ENCODE measurements at regions of chr6 and their contacts with region 1.

Region 1: DNA sequence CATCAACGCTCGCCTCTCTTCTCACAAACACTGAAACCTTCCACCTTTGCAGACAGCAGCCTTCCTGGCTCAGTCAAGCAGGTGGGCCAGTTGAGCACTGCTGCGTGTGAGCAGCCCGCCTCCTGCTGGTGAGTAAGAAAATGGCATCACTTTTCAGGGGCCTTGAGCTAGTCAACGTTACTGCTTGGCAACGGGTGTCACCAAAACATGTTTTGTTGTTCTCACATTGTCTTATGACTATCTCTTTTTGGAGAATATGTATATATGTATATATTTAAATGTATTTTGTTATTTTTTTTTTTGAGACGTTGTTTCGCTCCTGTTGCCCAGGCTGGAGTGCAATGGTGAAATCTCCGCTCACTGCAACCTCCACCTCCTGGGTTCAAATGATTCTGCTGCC is 97.0 kb upstream of the AGPAT4 start:
- DNase-seq: peak; percentile 49
- H3K27ac ChIP-seq: no peak overlapping the region
- CTCF ChIP-seq: peak; percentile 83

Region 2: DNA sequence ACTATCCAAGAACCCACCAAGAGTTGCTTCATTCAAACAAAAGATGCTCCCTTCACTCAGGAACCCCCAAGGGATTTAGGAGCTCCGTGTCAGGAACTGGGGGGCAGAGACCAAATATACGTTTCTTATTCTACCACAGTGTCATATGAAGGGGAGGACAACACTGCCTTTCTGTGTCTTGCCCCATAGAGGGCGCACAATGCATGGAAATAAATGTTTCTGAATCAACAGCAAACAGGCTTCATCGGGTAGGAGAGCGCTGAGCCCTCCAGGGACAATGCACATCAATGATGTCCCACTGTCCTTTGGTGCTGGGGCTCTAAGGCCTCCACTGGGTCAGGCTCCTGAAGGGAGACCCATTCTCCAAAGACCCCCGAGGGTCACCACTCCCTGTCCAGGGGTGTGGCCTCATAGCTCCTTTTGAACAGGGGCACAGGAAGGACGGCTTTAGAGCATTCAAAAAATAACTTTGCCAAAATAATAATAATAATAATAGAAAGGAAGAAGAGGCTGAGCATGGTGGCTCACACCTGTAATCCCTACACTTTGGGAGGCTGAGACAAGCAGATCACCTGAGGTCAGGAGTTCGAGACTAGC is 637.7 kb before region 1 on chr6:
- CTCF ChIA-PET with region 1: interaction called, 13 read pairs
- POLR2A ChIA-PET with region 1: interaction called, 6 read pairs
- DNase-seq: peak; percentile 56
- H3K27ac ChIP-seq: no peak overlapping the region
- CTCF ChIP-seq: peak; percentile 70

Region 3: GRCh38 chr6:161152907-161153662 is 217.8 kb before region 1 on chr6:
- CTCF ChIA-PET with region 1: interaction called, 10 read pairs
- POLR2A ChIA-PET with region 1: no interaction called
- DNase-seq: peak; percentile 26
- H3K27ac ChIP-seq: no peak overlapping the region
- CTCF ChIP-seq: no peak; the same call in 1 of the 2 replicates

Region 4: GRCh38 chr6:161346717-161347116 is 24.2 kb before region 1 on chr6:
- CTCF ChIA-PET with region 1: no interaction called
- POLR2A ChIA-PET with region 1: no interaction called
- DNase-seq: no peak
- H3K27ac ChIP-seq: no peak overlapping the region
- CTCF ChIP-seq: no peak

Region 5: GRCh38 chr6:161359618-161359945 is 11.3 kb before region 1 on chr6:
- CTCF ChIA-PET with region 1: interaction called, 10 read pairs
- POLR2A ChIA-PET with region 1: no interaction called
- DNase-seq: no peak
- H3K27ac ChIP-seq: peak overlapping the region; percentile 16; the same call in 1 of the 2 replicates
- CTCF ChIP-seq: no peak